Naive thymus-derived CD4-positive, alpha-beta T cell (primary cell): ENCODE measurements at regions of chr6 and their contacts with region 1.

Region 1: DNA sequence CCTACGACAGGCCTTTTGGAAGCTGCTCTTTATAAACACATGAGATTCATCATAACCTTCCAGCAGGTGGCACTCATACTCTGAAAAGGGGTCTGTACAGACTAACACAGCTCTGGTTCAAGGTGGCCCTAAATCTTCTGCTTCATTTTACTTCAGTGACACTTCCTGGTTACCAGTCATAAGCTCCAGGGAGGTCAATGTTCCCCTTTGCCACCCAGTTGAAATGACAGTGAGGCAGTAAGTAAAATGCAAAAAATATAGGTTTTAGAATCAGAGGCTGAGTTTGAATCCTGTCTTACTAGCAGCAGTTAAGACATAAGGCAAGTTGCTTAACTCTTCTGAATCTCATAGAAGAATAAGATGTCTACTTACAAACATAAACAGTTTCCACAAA is 132.8 kb downstream of the CDK19 start:
- DNase-seq: peak in 8 of 9 donors; percentile 42 to 84 (median 76)
- ATAC-seq: peak; percentile 99
- H3K4me3 ChIP-seq: no peak overlapping the region
- H3K4me3 Mint-ChIP-seq: no peak overlapping the region
- H3K27ac ChIP-seq: no peak overlapping the region
- H3K27ac Mint-ChIP-seq: peak overlapping the region in 4 of 9 donors; percentile 23 to 55 (median 44)
- H3K4me1 ChIP-seq: peaks cover 5 to 8% of the 10 kb centered on the region in 2 donors
- H3K4me1 Mint-ChIP-seq: peaks cover 5 to 18% (median 11%) of the 10 kb centered on the region in 7 donors
- H3K27me3 ChIP-seq: no peaks in the 10 kb centered on the region
- H3K27me3 Mint-ChIP-seq: no peaks in the 10 kb centered on the region

Region 2: DNA sequence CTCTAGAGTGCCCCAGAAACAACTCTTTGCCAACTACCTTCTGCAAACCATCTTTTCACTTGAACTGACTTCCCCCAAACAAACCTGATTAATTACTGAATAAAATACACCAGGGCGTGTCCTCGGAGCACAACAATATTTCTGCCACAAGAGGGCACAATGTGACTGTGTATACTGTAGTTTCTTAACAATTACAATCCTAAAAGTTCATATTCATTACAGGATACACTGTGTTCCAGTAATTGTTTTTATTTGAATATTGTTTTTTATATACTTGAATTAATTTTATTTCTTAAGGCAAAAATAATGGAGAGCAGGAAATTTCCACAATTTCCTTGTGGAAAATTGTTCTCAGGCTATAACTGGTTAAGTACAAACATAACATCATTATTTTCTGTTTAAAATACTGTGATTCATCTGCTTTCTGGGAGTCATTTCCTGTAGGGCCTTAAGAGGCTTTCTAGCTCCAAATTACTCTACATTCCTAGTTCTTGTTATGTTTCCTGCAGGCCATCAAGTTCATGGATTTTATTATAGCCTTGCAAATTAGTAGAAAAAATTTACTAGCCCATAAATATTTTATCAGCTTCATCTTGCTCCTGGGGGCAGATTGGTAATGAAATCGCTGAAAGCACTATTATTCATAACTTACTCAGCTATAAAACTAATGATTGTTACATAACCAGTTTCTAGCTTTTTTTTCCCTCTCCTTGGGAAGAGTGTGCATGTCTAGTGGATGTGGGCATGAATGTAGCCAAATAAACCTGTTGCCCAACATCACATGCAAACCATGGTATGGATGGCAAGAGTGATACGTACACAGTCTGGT is 154.1 kb before region 1 on chr6:
- CTCF ChIA-PET with region 1: no interaction called
- POLR2A ChIA-PET with region 1: no interaction called
- intact Hi-C with region 1: loop called (anchors 1 kb)
- DNase-seq: peak in 7 of 9 donors; percentile 15 to 61 (median 47)
- ATAC-seq: peak; percentile 83
- H3K4me3 ChIP-seq: no peak overlapping the region
- H3K4me3 Mint-ChIP-seq: no peak overlapping the region
- H3K27ac ChIP-seq: no peak overlapping the region
- H3K27ac Mint-ChIP-seq: peak overlapping the region in 1 of 9 donors; percentile 21
- H3K4me1 ChIP-seq: no peaks in the 10 kb centered on the region
- H3K4me1 Mint-ChIP-seq: peaks cover 0 to 10% (median 0%) of the 10 kb centered on the region in 7 donors
- H3K27me3 ChIP-seq: no peaks in the 10 kb centered on the region
- H3K27me3 Mint-ChIP-seq: peaks cover 0 to 11% (median 0%) of the 10 kb centered on the region in 5 donors

Region 3: DNA sequence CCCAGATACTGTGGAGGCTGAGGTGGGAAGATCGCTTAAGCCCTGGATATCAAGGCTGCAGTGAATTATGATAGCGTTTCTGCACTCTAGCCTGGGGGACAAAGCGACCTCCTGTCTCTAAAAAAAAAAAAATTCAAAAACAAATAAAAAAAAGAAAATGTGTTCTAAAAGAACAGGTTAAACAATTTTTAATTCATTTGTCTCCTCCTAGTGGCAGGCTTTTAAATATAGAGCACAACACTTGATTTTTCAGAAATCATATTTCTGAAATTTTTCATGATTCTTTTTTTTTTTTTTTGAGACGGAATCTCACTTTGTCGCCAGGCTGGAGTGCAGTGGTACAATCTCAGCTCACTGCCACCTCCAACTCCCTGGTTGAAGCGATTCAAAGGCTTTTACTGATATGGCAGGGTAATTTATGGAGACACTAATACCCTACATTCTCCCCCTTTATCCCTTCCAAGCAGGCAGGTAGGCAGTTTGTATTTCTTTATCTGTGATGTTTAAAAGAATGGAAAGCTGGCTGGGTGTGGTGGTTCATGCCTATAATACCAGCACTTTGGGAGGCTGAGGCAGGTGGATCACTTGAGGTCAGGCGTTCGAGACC is 267.3 kb after region 1 on chr6:
- CTCF ChIA-PET with region 1: interaction called, 51 read pairs
- POLR2A ChIA-PET with region 1: interaction called, 6 read pairs
- intact Hi-C with region 1: loop called (anchors 1 kb)
- DNase-seq: peak in 7 of 9 donors; percentile 17 to 64 (median 50)
- ATAC-seq: peak; percentile 52
- H3K4me3 ChIP-seq: no peak overlapping the region
- H3K4me3 Mint-ChIP-seq: no peak overlapping the region
- H3K27ac ChIP-seq: no peak overlapping the region
- H3K27ac Mint-ChIP-seq: no peak overlapping the region
- H3K4me1 ChIP-seq: no peaks in the 10 kb centered on the region
- H3K4me1 Mint-ChIP-seq: peaks cover 0 to 8% (median 0%) of the 10 kb centered on the region in 7 donors
- H3K27me3 ChIP-seq: no peaks in the 10 kb centered on the region
- H3K27me3 Mint-ChIP-seq: peaks cover 0 to 12% (median 6%) of the 10 kb centered on the region in 5 donors

Region 4: DNA sequence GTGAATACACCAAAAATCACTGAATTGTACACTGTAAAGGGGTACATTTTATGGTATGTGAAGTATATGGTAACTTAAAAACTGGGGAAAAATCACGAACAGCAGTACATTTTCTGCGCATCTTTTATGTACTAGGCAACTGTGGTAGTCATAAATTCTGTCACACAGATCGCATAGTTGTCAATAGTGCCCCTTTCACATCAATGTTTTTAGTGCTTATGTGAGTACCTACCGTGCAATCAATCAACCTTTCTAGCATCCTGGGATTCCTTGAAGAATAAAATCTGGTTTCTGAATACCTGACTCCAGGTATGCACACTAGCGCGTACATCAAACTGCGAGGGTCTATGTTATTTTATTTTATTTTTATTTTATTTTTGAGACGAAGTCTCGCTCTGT is 298.7 kb after region 1 on chr6:
- CTCF ChIA-PET with region 1: interaction called, 8 read pairs
- POLR2A ChIA-PET with region 1: interaction called, 3 read pairs
- intact Hi-C with region 1: loop called in 1 of 2 experiments (anchors 1 kb)
- DNase-seq: peak in 1 of 9 donors; percentile 28
- ATAC-seq: no peak
- H3K4me3 ChIP-seq: peak overlapping the region; percentile 81
- H3K4me3 Mint-ChIP-seq: peak overlapping the region; percentile 95 to 99 (median 98)
- H3K27ac ChIP-seq: peak overlapping the region; percentile 92
- H3K27ac Mint-ChIP-seq: peak overlapping the region; percentile 96 to 100 (median 99)
- H3K4me1 ChIP-seq: peaks cover 0 to 11% of the 10 kb centered on the region in 2 donors
- H3K4me1 Mint-ChIP-seq: peaks cover 19 to 46% (median 35%) of the 10 kb centered on the region in 7 donors
- H3K27me3 ChIP-seq: no peaks in the 10 kb centered on the region
- H3K27me3 Mint-ChIP-seq: no peaks in the 10 kb centered on the region

Region 5: GRCh38 chr6:110999634-111000270 is 317.3 kb after region 1 on chr6:
- CTCF ChIA-PET with region 1: interaction called, 12 read pairs
- POLR2A ChIA-PET with region 1: no interaction called
- intact Hi-C with region 1: loop called (anchors 1 kb)
- DNase-seq: peak in 5 of 9 donors; percentile 15 to 39 (median 25)
- ATAC-seq: peak; percentile 46
- H3K4me3 ChIP-seq: no peak overlapping the region
- H3K4me3 Mint-ChIP-seq: no peak overlapping the region
- H3K27ac ChIP-seq: no peak overlapping the region
- H3K27ac Mint-ChIP-seq: peak overlapping the region in 1 of 9 donors; percentile 56
- H3K4me1 ChIP-seq: no peaks in the 10 kb centered on the region
- H3K4me1 Mint-ChIP-seq: peaks cover 0 to 8% (median 2%) of the 10 kb centered on the region in 7 donors
- H3K27me3 ChIP-seq: no peaks in the 10 kb centered on the region
- H3K27me3 Mint-ChIP-seq: no peaks in the 10 kb centered on the region

Region 6: GRCh38 chr6:112037783-112038216 is 1355.3 kb after region 1 on chr6:
- CTCF ChIA-PET with region 1: no interaction called
- POLR2A ChIA-PET with region 1: no interaction called
- intact Hi-C with region 1: loop called in 1 of 2 experiments (anchors 5 kb)
- DNase-seq: no peak
- ATAC-seq: peak; percentile 54
- H3K4me3 ChIP-seq: no peak overlapping the region
- H3K4me3 Mint-ChIP-seq: peak overlapping the region in 2 of 10 donors; percentile 16 to 36
- H3K27ac ChIP-seq: no peak overlapping the region
- H3K27ac Mint-ChIP-seq: peak overlapping the region in 3 of 9 donors; percentile 34 to 85 (median 73)
- H3K4me1 ChIP-seq: peaks cover 4 to 65% of the 10 kb centered on the region in 2 donors
- H3K4me1 Mint-ChIP-seq: peaks cover 27 to 93% (median 70%) of the 10 kb centered on the region in 7 donors
- H3K27me3 ChIP-seq: no peaks in the 10 kb centered on the region
- H3K27me3 Mint-ChIP-seq: peaks cover 0 to under 1% (median 0%) of the 10 kb centered on the region in 5 donors